Ovary (tissue), 10 donors: ENCODE measurements at regions of chr10 and their contacts with region 1.

Region 1: DNA sequence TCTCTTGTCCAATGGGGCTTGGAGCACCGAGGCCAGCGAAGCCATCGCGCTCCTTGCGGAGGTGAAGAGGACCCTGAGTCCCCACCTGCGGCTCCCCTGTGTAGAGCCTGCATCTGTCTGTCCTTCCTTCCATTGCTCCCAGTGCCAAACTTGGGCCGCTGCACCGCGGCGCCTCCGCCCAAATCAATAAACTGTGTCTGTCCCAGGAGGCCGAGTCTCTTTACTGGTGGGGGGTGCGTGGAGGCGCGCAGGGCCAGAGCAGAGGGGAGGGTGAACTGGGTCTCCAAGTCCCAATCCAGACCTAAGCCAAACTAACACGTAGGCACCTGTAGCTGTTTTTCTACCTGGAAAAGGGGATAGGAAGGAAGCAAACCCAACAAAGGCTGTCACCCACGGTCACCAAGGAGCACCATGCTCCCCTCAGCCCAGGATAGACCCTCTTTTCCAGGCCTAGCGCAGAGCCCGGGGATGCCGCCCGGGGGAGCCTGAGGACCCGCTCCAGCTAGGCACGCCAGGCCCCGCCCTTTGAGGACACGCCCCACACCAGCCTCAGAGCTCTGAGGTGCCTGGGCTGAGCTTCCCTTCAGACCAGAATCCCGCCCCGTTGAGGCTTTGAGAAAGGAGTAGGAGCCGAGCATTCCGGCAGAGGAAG is 1.2 kb upstream of the CHAT start:
- DNase-seq: peak in 1 of 5 donors; percentile 10
- H3K4me3 ChIP-seq: no peak overlapping the region
- H3K27ac ChIP-seq: no peak overlapping the region
- H3K4me1 ChIP-seq: no peaks in the 10 kb centered on the region
- H3K27me3 ChIP-seq: peaks cover 2% of the 10 kb centered on the region
- CTCF ChIP-seq: no peak
- EP300 ChIP-seq: no peak
- POLR2A ChIP-seq: no peak

Region 2: GRCh38 chr10:49564461-49565009 is 48.1 kb before region 1 on chr10:
- intact Hi-C with region 1: loop called in 1 of 4 experiments (anchors 1 kb)
- DNase-seq: no peak
- H3K4me3 ChIP-seq: no peak overlapping the region
- H3K27ac ChIP-seq: no peak overlapping the region
- H3K4me1 ChIP-seq: no peaks in the 10 kb centered on the region
- H3K27me3 ChIP-seq: no peaks in the 10 kb centered on the region
- CTCF ChIP-seq: no peak
- EP300 ChIP-seq: no peak
- POLR2A ChIP-seq: no peak

Region 3: DNA sequence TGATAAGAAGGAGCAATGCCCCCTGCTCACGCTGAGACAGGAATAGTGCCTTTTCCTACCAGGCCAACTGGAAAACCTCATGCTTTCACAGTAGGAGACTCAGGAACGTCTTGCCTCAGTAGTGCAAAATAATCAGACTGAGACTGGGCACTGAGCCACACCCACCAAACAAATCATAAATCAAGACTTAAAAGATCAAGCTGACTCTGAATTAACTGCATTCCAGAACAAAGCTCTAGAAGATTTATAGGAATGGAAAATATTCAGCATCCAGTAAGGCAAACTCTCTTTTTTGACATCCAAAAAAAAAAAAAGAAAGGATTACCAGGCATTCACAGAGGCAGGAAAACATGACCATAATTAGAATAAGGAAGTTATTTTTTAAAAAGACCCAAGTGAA is 33.0 kb before region 1 on chr10:
- intact Hi-C with region 1: no loop called
- DNase-seq: no peak
- H3K4me3 ChIP-seq: no peak overlapping the region
- H3K27ac ChIP-seq: no peak overlapping the region
- H3K4me1 ChIP-seq: no peaks in the 10 kb centered on the region
- H3K27me3 ChIP-seq: no peaks in the 10 kb centered on the region
- CTCF ChIP-seq: no peak
- EP300 ChIP-seq: no peak
- POLR2A ChIP-seq: no peak